H1 (cell line): ENCODE measurements at regions of chr11 and their contacts with region 1.

Region 1: GRCh38 chr11:65726660-65727059 is 6.1 kb upstream of the RNASEH2C start:
- DNase-seq: no peak
- H3K4me3 ChIP-seq: no peak overlapping the region
- H3K27ac ChIP-seq: no peak overlapping the region
- H3K4me1 ChIP-seq: no peaks in the 10 kb centered on the region
- H3K27me3 ChIP-seq: peaks cover 0 to 5% (median 1%) of the 10 kb centered on the region in 4 experiments; a peak in 2 of 7 replicates
- CTCF ChIP-seq: peak in 2 of 3 experiments; percentile 13 to 51; a peak in 2 of 4 replicates
- EP300 ChIP-seq: no peak
- POLR2A ChIP-seq: no peak
- RAD21 ChIP-seq: peak in 1 of 2 experiments; percentile 13; a peak in 1 of 4 replicates

Region 2: GRCh38 chr11:65700391-65700790 is 26.3 kb before region 1 on chr11:
- CTCF ChIA-PET with region 1: interaction called, 10 read pairs
- POLR2A ChIA-PET with region 1: no interaction called
- DNase-seq: no peak
- H3K4me3 ChIP-seq: no peak overlapping the region
- H3K27ac ChIP-seq: no peak overlapping the region
- H3K4me1 ChIP-seq: no peaks in the 10 kb centered on the region
- H3K27me3 ChIP-seq: no peaks in the 10 kb centered on the region; a peak in 3 of 7 replicates
- CTCF ChIP-seq: no peak
- EP300 ChIP-seq: no peak
- POLR2A ChIP-seq: no peak
- RAD21 ChIP-seq: no peak

Region 3: GRCh38 chr11:65711785-65712632 is 14.7 kb before region 1 on chr11 and contains the start of gene KAT5:
- CTCF ChIA-PET with region 1: interaction called, 26 read pairs
- POLR2A ChIA-PET with region 1: interaction called, 25 read pairs
- DNase-seq: peak; percentile 91 to 100
- H3K4me3 ChIP-seq: peak within 1 kb of the TSS; percentile 62 to 87 (median 74)
- H3K27ac ChIP-seq: peak within 1 kb of the TSS; percentile 99
- H3K4me1 ChIP-seq: peaks cover 0 to 2% (median 2%) of the 10 kb centered on the region in 4 experiments; a peak in 1 of 7 replicates
- H3K27me3 ChIP-seq: no peaks in the 10 kb centered on the region
- CTCF ChIP-seq: peak; percentile 95 to 96 (median 95)
- EP300 ChIP-seq: 0 out of 3 replicates have a peak, but pooled peaks of 1 of the 2 experiments have one; percentile 60
- POLR2A ChIP-seq: peak; percentile 86 to 88
- RAD21 ChIP-seq: peak; percentile 94 to 96
- total RNA-seq, gene KAT5: 36.4 and 37.4 TPM in 2 replicates

Region 4: DNA sequence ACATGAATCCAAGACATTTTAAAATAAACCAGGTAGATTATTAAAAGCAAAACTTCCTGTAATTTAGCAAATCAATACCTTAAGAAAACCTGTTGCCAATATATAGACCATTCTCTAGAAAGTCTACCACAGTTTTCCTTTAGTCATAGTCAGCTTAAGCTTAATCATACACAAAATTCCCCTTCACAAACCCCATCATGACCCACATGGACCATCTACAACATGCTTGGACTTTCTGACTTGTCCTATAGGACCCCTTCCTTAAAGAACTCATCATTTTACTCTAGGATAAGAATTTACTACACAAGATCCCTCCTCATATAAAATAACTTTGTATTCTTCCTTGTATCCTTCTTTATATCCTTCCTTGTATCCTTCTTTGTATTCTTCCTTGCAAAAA is 10.2 kb after region 1 on chr11:
- CTCF ChIA-PET with region 1: interaction called, 12 read pairs
- POLR2A ChIA-PET with region 1: interaction called, 3 read pairs
- DNase-seq: no peak
- H3K4me3 ChIP-seq: no peak overlapping the region
- H3K27ac ChIP-seq: no peak overlapping the region
- H3K4me1 ChIP-seq: no peaks in the 10 kb centered on the region
- H3K27me3 ChIP-seq: peaks cover 0 to 2% (median 0%) of the 10 kb centered on the region in 4 experiments; a peak in 1 of 7 replicates
- CTCF ChIP-seq: no peak
- EP300 ChIP-seq: no peak
- POLR2A ChIP-seq: no peak
- RAD21 ChIP-seq: no peak

Region 5: DNA sequence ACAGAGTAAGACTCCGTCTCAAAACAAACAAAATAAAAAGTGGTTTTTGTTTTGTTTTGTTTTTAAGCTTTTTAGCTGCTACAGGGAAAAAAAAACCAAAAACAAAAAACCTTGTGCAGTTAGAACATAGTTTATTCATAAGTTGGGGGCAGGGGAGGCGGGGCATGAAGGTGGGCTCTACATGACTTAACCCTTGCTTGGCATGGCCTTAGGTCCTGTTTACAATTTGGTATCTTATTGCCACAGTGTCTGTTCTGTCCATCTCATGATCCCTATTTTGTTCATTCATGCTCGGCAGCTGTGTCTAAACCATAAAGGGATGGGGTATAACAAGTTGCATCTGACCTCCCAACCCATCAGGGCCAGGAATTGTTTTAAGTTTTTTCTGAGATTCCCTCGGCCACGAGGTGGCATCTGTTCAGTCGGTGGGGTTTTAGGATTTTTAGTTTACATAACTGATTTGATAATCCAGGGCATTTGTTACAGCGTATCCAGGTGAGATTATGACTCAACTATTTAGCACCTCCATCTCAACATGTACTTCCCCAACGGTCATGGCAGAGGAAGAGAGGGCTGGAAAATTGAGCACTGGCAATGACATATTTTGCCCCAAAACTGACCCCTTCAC is 47.2 kb after region 1 on chr11:
- CTCF ChIA-PET with region 1: interaction called, 14 read pairs
- POLR2A ChIA-PET with region 1: no interaction called
- DNase-seq: no peak
- H3K4me3 ChIP-seq: no peak overlapping the region
- H3K27ac ChIP-seq: no peak overlapping the region
- H3K4me1 ChIP-seq: no peaks in the 10 kb centered on the region
- H3K27me3 ChIP-seq: no peaks in the 10 kb centered on the region
- CTCF ChIP-seq: no peak; a peak in 1 of 4 replicates
- EP300 ChIP-seq: no peak
- POLR2A ChIP-seq: no peak
- RAD21 ChIP-seq: 0 out of 4 replicates have a peak, but pooled peaks of 1 of the 2 experiments have one; percentile 5